AG04449 (cell line): ENCODE measurements at regions of chr10 and their contacts with region 1.

Region 1: GRCh38 chr10:102394079-102394800 is 1.3 kb upstream of the NFKB2 start:
- DNase-seq: peak; percentile 70
- H3K4me3 ChIP-seq: peak overlapping the region; percentile 78
- CTCF ChIP-seq: no peak

Region 2: DNA sequence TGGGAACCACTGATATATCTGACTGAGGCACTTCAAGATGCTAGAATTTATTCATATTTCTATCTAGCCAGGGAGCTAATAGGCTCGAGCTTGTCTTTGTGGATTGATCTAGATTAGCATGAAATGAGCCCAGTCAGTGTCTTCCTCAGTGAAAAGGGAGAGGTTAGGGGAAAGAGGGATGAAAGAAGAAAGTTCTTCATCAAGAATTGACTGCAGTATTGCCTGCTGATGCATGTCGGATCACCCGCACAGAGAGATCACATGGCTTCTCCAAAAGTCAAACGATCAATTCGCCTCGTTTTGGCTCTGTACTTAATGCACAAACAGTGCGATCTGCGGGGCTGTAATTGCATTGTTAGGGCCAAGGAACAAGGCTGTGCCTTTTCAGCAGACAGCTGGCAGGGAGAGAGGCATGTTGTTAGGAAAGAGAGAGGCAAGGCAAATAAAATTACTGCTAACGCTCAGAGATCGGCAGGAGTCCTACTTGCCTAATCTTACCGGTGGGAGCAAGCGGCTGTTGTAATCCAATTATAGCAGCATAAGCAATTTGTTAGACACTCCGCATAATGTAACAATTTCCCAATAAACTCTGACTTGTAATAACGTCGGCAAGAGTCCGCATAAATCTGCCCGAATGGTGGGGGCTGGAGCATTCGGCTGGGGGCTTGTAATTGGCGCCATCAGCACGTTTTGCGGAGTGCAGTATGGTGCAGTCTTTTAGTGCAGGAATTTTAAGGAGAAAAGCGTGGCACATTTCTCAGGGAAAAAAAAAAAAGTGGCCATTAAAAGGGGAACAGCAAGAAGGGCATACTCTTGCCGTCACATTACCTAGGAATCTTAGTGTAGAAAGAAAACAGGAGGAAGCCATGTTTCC is 908.3 kb before region 1 on chr10:
- CTCF ChIA-PET with region 1: no interaction called
- POLR2A ChIA-PET with region 1: no interaction called
- DNase-seq: no peak
- H3K4me3 ChIP-seq: no peak overlapping the region
- CTCF ChIP-seq: no peak

Region 3: DNA sequence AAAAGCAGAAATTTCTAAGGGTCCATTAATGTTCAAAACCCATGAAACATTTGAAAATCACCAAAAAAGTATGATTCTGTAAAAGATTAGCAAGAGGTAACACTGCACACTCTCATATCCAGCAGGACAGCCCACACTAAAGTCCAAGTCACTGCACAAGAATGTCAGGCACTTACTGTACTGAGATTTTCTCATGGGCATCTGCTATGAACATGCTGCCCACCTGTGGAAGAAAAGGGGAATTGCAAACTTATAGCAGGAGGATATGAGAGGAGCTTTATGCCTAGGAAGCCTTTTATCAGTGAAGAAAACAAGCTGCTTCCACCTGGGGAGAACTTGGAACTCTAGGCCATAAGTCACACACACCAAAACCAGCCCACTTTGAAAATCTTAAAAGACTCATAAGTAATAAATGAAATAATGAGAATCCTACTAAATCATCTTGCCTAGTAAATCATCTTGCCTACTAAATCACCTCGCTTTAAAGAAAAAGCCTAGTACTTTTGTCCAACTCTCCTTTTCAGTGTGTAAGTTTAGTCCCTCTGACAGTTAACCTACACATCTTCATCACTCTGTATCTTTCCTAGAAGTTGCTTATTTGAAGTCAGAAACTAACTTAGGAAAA is 384.3 kb before region 1 on chr10:
- CTCF ChIA-PET with region 1: no interaction called
- POLR2A ChIA-PET with region 1: no interaction called
- DNase-seq: peak; percentile 73
- H3K4me3 ChIP-seq: no peak overlapping the region
- CTCF ChIP-seq: peak; percentile 82

Region 4: GRCh38 chr10:102368072-102368471 is 26.2 kb before region 1 on chr10:
- CTCF ChIA-PET with region 1: interaction called, 21 read pairs
- POLR2A ChIA-PET with region 1: no interaction called
- DNase-seq: no peak
- H3K4me3 ChIP-seq: no peak overlapping the region
- CTCF ChIP-seq: no peak

Region 5: DNA sequence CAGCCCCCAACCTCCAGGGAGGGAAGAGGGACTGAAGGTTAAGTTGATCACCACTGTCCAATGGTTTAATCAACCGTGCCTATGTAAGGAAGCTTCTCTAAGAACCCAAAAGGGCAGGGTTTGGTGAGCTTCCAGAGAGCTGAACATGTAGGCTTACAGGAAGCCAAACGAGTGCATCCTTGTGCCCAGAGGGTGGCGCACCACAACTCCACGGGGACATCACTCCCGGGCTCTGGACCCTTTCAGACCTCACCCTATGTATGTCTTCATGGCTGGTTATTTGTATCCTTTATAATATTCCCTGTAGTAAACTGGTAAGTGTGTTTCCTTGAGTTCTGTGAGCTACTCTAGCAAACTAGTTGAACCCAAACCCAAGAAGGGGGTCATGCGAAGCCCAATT is 10.2 kb before region 1 on chr10:
- CTCF ChIA-PET with region 1: interaction called, 111 read pairs
- POLR2A ChIA-PET with region 1: no interaction called
- DNase-seq: no peak
- H3K4me3 ChIP-seq: no peak overlapping the region
- CTCF ChIP-seq: peak; percentile 26

Region 6: DNA sequence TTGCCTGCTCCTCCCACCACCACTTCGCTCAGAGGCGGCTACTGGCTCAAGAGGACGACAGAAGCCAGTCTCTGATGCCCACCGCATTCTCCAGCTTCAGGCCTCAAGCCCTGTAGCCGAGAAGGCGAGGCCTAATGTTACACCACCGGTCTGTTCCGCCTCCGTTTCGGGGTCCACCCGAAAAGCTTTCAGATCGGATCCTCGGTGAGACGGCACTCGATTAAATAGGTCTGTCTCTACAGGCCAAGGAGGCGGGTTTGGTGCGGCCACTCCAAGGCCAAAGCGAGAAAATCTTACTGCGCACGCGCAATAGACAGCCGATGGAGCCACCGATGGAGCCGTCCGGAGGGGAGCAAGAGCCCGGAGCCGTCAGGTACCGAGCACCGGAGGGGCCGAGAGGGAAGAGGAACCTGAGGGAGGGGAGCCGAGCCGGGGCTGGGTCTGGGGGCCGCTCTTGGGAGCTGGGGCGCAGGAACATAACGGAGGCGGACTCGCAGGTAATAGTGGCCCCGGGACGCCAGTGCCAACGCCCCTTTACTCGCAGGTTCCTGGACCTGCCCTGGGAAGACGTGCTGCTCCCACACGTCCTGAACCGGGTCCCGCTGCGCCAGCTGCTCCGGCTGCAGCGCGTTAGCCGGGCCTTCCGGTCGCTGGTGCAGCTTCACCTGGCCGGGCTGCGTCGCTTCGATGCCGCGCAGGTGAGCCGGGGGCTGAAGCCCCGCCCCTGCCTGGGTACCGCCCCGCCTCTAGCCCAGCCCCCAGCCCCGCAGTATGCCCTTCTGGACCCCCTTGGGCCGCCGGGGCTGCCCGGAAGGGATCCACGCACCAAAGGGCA is 26.8 kb after region 1 on chr10 and contains the start of gene FBXL15:
- CTCF ChIA-PET with region 1: interaction called, 161 read pairs
- POLR2A ChIA-PET with region 1: interaction called, 4 read pairs
- DNase-seq: peak; percentile 71
- H3K4me3 ChIP-seq: peak within 1 kb of the TSS; percentile 92
- CTCF ChIP-seq: no peak

Region 7: GRCh38 chr10:102485093-102485784 is 91.0 kb after region 1 on chr10:
- CTCF ChIA-PET with region 1: interaction called, 36 read pairs
- POLR2A ChIA-PET with region 1: no interaction called
- DNase-seq: no peak
- H3K4me3 ChIP-seq: no peak overlapping the region
- CTCF ChIP-seq: no peak

Region 8: DNA sequence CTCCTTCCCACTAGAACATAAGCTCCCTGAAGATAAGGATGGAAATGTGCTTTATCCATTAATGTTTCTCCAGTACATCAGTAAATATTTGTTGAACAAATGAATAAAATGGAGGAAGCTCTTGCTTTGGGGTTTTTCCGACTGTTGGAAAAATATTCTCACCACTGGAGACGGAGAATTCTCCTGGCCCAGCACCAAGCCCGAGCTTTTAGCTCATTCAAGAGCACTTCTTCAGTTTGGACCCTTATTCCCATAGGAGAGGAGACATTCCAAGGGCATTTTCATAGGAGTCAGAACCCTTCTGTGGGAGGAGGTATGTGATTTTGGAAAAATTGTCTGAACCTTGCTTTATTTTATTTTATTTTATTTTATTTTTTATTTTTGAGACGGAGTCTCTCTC is 130.5 kb after region 1 on chr10:
- CTCF ChIA-PET with region 1: no interaction called
- POLR2A ChIA-PET with region 1: no interaction called
- DNase-seq: no peak
- H3K4me3 ChIP-seq: no peak overlapping the region
- CTCF ChIP-seq: no peak